WTC11 (cell line): ENCODE measurements at regions of chr6 and their contacts with region 1.

Region 1: DNA sequence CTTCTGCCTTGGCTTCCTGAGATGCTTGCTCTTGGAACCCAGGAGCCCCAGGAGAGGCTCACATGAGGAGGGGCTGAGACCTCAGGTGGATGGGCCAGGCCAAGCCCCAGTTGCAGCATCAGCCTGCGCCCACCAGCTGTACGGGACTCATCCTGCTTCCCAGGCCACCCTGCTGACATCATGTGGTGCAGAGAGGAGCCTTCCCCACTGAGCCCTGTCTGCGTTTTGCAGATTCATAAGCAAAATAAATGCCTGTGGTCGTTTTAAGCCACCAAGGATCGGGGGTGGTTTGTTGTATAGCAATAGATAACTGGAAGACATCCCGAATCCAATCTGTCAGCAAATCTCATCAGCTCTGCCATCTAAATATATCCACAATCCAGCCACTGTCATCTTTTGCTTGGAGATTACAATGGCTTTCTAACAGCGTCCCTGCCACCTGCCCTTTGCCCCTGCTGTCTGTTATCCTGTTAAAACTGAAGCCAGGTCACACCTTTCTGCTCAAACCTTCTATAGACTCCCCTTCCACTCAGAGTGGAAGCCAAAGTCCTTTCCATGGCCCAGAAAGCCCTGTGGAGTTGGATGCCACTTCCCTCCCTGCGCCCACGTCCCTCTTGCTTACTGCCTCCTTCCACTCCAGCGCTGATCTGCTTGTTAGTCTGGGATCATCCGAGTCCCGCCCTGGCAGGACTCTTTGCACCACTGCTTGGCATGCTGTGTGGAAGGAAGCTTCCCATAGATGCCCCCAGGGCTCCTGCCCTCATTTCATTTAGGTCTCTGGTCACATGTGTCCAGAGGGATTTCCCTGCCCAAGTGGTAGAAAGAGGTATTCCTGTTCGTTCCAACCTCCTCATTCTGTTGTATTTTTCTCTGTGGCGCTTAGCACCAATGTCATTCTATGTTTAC is 24.0 kb upstream of the MLN start:
- DNase-seq: no peak
- ATAC-seq: no peak
- H3K4me3 Mint-ChIP-seq: no peak overlapping the region
- H3K27ac Mint-ChIP-seq: no peak overlapping the region
- H3K4me1 Mint-ChIP-seq: peaks cover 37% of the 10 kb centered on the region
- H3K27me3 Mint-ChIP-seq: peaks cover 16% of the 10 kb centered on the region; the same call in 1 of the 2 replicates
- CTCF ChIP-seq: no peak

Region 2: GRCh38 chr6:33672808-33673207 is 155.0 kb before region 1 on chr6:
- CTCF ChIA-PET with region 1: no interaction called
- POLR2A ChIA-PET with region 1: no interaction called
- DNase-seq: peak; percentile 35
- ATAC-seq: peak; percentile 60
- H3K4me3 Mint-ChIP-seq: no peak overlapping the region
- H3K27ac Mint-ChIP-seq: no peak overlapping the region
- H3K4me1 Mint-ChIP-seq: no peaks in the 10 kb centered on the region
- H3K27me3 Mint-ChIP-seq: no peaks in the 10 kb centered on the region
- CTCF ChIP-seq: no peak

Region 3: DNA sequence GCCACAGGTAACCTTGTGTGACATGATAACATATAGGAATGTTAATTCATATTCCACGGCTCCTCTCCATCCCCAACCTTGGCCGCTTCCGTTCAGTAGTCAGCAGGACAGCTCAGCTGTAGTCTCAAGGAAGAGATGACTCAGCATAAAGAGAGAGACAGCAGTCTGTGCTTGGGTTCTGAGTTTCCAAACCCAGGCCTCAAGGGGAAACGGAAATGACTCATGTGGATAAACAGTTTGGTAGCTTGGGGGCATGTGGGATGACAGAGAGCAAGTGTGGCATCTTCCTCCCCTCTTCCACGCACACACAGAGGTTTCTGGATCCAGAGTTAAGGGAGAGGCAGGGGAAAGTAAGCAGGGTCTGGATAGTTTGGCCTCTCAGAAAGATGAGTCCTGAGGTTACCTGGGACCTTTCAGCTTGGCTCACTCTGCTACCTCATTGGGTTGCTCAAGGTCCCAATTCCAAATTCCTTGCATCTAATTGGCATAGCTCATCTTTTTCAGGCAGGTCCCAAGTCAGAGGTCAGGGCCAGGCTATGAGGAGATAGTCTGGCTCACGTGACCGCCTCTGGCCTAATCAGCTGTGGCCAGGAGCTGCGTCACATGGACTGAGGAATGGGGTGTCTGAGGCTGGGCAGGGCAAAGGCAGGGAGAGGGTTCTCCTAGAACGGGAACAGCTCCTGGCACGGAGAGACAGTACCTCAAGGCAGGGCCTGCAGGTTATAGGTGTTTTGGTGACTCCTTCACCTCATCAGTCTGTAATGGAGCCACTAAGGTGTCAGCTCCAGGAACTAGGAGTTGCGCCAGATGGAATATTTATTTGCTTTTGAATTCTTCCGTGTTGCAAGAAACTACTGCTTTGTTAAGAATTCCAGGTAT is 12.5 kb after region 1 on chr6:
- CTCF ChIA-PET with region 1: interaction called, 12 read pairs
- POLR2A ChIA-PET with region 1: no interaction called
- DNase-seq: no peak
- ATAC-seq: no peak
- H3K4me3 Mint-ChIP-seq: no peak overlapping the region
- H3K27ac Mint-ChIP-seq: peak overlapping the region; percentile 16
- H3K4me1 Mint-ChIP-seq: peaks cover 30% of the 10 kb centered on the region
- H3K27me3 Mint-ChIP-seq: peaks cover 19% of the 10 kb centered on the region
- CTCF ChIP-seq: no peak